Endothelial cell of umbilical vein (primary cell): ENCODE measurements at regions of chr17 and their contacts with region 1.

Region 1: GRCh38 chr17:45317112-45317928 is 500 bp upstream of the MAP3K14 start:
- DNase-seq: peak; percentile 100
- H3K4me3 ChIP-seq: peak overlapping the region in 2 of 3 experiments; percentile 1 to 34
- H3K27ac ChIP-seq: no peak overlapping the region
- H3K4me1 ChIP-seq: peaks cover 59% of the 10 kb centered on the region
- H3K27me3 ChIP-seq: no peaks in the 10 kb centered on the region
- CTCF ChIP-seq: no peak
- POLR2A ChIP-seq: no peak

Region 2: GRCh38 chr17:44899069-44899782 is 418.1 kb before region 1 on chr17 and contains the start of gene EFTUD2:
- CTCF ChIA-PET with region 1: no interaction called
- POLR2A ChIA-PET with region 1: no interaction called
- dilution Hi-C with region 1: no loop called
- intact Hi-C with region 1: no loop called
- DNase-seq: peak; percentile 93
- H3K4me3 ChIP-seq: peak within 1 kb of the TSS; percentile 67 to 97 (median 73)
- H3K27ac ChIP-seq: peak within 1 kb of the TSS; percentile 96
- H3K4me1 ChIP-seq: peaks cover 37% of the 10 kb centered on the region
- H3K27me3 ChIP-seq: no peaks in the 10 kb centered on the region
- CTCF ChIP-seq: no peak
- POLR2A ChIP-seq: peak; percentile 87
- total RNA-seq, gene EFTUD2: 170 and 171 TPM in 2 replicates

Region 3: DNA sequence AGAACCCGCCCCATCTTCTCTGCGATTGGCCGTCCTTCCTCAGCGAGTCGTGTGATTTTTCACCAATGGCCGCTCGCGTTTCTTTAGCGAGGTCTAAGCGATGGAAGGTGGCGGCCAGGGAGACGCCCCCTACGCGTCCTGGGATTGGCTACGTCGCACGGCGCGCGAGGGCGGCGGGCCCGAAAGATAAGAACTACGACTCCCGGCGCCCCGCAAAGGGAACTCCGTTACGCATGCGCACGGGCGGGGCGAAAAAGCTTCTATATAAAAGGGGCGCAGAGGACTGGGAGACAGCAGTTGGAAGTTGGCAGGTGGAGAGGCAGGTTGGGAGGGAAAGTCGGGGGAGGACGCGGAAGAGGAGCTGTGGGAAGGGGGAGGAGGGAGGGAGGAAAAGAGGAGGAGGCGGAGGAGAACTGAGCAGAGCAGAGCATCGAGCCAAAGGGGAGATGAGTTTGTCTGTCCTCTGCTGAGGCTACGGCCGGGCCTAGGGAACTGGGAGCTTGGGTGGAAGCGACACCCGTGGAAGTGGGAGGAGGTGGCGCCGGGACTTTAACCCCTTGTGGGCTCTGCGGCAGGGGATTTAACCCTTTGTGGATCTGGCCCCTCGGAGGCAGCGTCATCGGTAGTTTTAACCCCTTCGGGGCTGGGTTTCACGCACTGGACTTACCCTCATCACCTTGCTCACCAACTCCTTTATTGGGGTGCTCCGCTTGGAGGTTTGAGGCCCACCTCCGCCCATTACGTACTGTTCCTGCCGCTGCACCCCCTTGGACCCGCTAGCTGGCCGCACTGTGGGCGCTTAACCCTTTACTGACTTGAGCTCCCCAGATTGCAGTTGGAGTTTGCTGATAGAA is 168.9 kb before region 1 on chr17 and contains the start of gene HEXIM1:
- CTCF ChIA-PET with region 1: interaction called, 5 read pairs
- POLR2A ChIA-PET with region 1: interaction called, 5 read pairs
- dilution Hi-C with region 1: no loop called
- intact Hi-C with region 1: loop called (anchors 2 kb)
- DNase-seq: peak; percentile 100
- H3K4me3 ChIP-seq: peak within 1 kb of the TSS; percentile 68 to 95 (median 90)
- H3K27ac ChIP-seq: peak within 1 kb of the TSS; percentile 97
- H3K4me1 ChIP-seq: peaks cover 24% of the 10 kb centered on the region
- H3K27me3 ChIP-seq: no peaks in the 10 kb centered on the region
- CTCF ChIP-seq: no peak
- POLR2A ChIP-seq: peak; percentile 100
- total RNA-seq, gene HEXIM1: 20.0 and 20.6 TPM in 2 replicates

Region 4: GRCh38 chr17:45293413-45294211 is 23.7 kb before region 1 on chr17:
- CTCF ChIA-PET with region 1: interaction called, 31 read pairs
- POLR2A ChIA-PET with region 1: interaction called, 3 read pairs
- dilution Hi-C with region 1: no loop called
- intact Hi-C with region 1: loop called (anchors 1 kb)
- DNase-seq: peak; percentile 94
- H3K4me3 ChIP-seq: no peak overlapping the region
- H3K27ac ChIP-seq: peak overlapping the region; percentile 50
- H3K4me1 ChIP-seq: peaks cover 45% of the 10 kb centered on the region
- H3K27me3 ChIP-seq: no peaks in the 10 kb centered on the region
- CTCF ChIP-seq: peak; percentile 5 to 30
- POLR2A ChIP-seq: peak; percentile 41

Region 5: DNA sequence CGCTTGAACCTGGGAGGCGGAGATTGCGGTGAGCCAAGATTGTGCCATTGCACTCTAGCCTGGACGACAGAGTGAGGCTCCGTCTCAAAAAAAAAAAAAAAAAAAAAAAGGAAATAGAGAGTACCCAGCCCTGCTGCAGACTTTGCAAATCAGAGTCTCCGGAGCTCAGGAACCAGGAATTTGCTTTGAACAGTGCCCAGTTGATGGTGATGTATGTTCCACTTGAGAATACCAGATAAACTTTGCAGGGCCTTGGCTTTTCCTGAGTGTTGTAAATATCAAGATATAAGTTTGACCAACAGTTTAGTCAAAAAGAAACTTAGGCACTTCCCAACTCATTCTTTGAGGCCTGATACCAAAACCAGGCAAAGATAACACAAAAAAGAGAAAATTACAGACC is 30.1 kb after region 1 on chr17:
- CTCF ChIA-PET with region 1: no interaction called
- POLR2A ChIA-PET with region 1: no interaction called
- dilution Hi-C with region 1: no loop called
- intact Hi-C with region 1: no loop called
- DNase-seq: no peak
- H3K4me3 ChIP-seq: no peak overlapping the region
- H3K27ac ChIP-seq: no peak overlapping the region
- H3K4me1 ChIP-seq: peaks cover under 1% of the 10 kb centered on the region
- H3K27me3 ChIP-seq: no peaks in the 10 kb centered on the region
- CTCF ChIP-seq: no peak
- POLR2A ChIP-seq: no peak

Region 6: GRCh38 chr17:45364531-45365390 is 47.4 kb after region 1 on chr17:
- CTCF ChIA-PET with region 1: interaction called, 30 read pairs
- POLR2A ChIA-PET with region 1: no interaction called
- dilution Hi-C with region 1: no loop called
- intact Hi-C with region 1: no loop called
- DNase-seq: peak; percentile 30
- H3K4me3 ChIP-seq: no peak overlapping the region
- H3K27ac ChIP-seq: no peak overlapping the region
- H3K4me1 ChIP-seq: peaks cover 5% of the 10 kb centered on the region
- H3K27me3 ChIP-seq: peaks cover 0 to 4% of the 10 kb centered on the region in 2 experiments
- CTCF ChIP-seq: no peak
- POLR2A ChIP-seq: no peak

Region 7: DNA sequence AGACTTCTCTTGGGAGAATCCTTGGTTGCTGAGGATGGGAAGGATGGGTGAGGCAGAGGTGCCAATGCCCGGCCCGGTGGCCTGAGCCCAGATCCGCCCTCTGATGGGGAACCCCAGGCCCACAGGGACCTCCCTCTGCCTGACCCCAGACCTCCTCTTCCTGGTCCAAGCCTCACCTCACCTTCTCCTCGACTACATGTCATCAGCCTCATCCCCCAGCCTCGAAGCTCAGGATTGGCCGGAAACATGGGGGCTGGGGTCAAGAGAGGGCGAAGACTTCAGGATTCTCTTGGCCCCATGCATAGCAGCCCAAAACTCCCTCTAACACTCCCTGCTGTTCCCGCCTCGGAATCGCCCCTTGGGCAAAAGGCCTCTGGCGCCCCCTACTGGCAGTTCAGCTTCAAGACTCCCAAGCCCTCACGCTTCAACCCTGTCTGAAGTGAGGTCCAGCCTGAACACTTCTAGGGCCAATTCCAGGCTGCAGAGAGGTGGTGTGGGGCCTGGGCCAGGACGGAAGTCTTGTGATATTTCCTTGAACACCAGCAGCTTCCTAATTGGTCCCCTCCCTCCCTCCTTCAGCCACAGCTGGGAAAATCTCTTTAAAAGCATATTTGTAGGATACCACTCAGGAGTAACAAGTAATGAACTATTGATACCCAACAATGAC is 68.1 kb after region 1 on chr17:
- CTCF ChIA-PET with region 1: interaction called, 26 read pairs
- POLR2A ChIA-PET with region 1: interaction called, 7 read pairs
- dilution Hi-C with region 1: no loop called
- intact Hi-C with region 1: loop called (anchors 1 kb)
- DNase-seq: peak; percentile 77
- H3K4me3 ChIP-seq: no peak overlapping the region
- H3K27ac ChIP-seq: no peak overlapping the region
- H3K4me1 ChIP-seq: no peaks in the 10 kb centered on the region
- H3K27me3 ChIP-seq: peaks cover 0 to 6% of the 10 kb centered on the region in 2 experiments
- CTCF ChIP-seq: peak; percentile 94 to 97
- POLR2A ChIP-seq: no peak